Transverse colon (tissue), 4 donors: ENCODE measurements at regions of chr7 and their contacts with region 1.

Region 1: GRCh38 chr7:77759294-77759889 is 38.8 kb downstream of the TMEM60 start:
- DNase-seq: peak; percentile 66
- H3K4me3 ChIP-seq: no peak overlapping the region
- H3K27ac ChIP-seq: peak overlapping the region in 1 of 4 donors; percentile 44
- H3K4me1 ChIP-seq: peaks cover 0 to 46% (median 16%) of the 10 kb centered on the region in 4 donors
- H3K27me3 ChIP-seq: no peaks in the 10 kb centered on the region
- CTCF ChIP-seq: peak; percentile 78 to 86 (median 83)
- EP300 ChIP-seq: no peak
- POLR2A ChIP-seq: no peak

Region 2: DNA sequence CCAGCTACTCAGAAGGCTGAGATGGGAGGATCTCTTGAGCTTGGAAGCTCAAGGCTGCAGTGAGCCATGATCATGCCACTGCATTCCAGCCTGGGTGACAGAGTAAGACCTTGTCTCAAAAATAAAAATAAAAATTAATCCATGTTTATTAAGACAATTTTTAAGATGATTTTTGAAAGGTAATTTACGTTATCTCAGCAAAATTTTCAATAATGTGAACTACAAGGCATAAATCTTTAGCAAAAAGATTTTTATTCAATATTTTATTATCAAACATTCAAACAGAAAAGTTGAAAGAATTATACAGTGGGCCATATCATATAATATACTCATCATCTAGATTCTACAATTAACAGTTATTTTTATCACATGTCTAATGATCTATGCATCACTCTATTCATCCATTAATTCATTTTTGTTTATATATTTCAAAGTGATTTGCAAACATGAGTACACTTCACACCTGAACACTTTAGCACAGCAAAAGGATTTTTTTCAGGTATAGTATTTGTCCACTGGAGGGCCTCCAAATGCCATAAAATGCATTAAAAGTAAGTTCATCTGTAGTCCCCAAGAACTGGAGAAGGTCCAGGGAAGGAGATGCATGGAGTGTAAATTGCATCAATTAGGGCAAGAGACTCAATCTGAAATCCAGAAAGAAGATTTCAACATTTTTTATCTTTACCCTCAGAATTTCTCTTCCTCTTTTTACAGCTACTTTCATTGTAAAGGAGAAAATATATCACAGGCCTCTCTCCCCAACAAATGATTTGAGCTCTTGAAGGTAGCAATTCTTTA is 101.8 kb before region 1 on chr7:
- in situ Hi-C with region 1: loop called (anchors 5 to 10 kb)
- intact Hi-C with region 1: loop called (anchors 5 kb)
- DNase-seq: no peak
- H3K4me3 ChIP-seq: no peak overlapping the region
- H3K27ac ChIP-seq: no peak overlapping the region
- H3K4me1 ChIP-seq: peaks cover 4 to 48% (median 21%) of the 10 kb centered on the region in 4 donors
- H3K27me3 ChIP-seq: no peaks in the 10 kb centered on the region
- CTCF ChIP-seq: peak; percentile 43 to 74 (median 56)
- EP300 ChIP-seq: no peak
- POLR2A ChIP-seq: no peak

Region 3: DNA sequence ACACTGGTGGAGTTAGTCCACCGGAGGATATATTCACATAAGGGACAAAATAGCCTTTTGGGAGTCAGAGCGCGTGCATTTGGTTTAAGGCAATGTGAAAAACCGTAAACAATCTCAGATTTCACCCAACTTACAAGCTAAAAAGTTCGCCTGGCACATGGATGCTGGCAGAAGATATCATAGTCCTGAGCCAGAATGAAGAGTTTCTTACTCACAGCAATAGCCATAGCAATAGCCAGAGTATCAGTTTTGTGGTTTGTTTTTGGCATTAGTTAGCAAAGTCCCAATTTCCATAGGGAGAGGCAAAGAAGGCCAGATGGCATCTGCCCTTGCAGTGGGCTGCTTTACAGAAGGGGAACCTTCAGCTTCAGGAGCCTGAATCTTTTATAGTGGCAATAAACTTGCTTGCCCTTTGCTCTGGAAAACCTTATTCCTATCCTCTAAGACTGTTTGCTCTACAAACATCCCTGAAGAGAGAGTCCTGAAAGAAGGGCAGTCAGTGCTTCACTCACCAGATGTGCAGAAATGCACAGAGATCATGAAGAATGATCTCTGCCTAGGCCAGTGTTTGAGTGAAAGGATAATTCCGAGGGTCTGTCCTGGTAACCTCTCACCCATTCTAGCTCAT is 91.8 kb before region 1 on chr7:
- in situ Hi-C with region 1: loop called in 2 of 4 experiments (anchors 10 kb)
- intact Hi-C with region 1: no loop called
- DNase-seq: peak; percentile 35
- H3K4me3 ChIP-seq: no peak overlapping the region
- H3K27ac ChIP-seq: peak overlapping the region; percentile 53 to 82 (median 70)
- H3K4me1 ChIP-seq: peaks cover 5 to 52% (median 22%) of the 10 kb centered on the region in 4 donors
- H3K27me3 ChIP-seq: no peaks in the 10 kb centered on the region
- CTCF ChIP-seq: no peak
- EP300 ChIP-seq: no peak
- POLR2A ChIP-seq: no peak

Region 4: DNA sequence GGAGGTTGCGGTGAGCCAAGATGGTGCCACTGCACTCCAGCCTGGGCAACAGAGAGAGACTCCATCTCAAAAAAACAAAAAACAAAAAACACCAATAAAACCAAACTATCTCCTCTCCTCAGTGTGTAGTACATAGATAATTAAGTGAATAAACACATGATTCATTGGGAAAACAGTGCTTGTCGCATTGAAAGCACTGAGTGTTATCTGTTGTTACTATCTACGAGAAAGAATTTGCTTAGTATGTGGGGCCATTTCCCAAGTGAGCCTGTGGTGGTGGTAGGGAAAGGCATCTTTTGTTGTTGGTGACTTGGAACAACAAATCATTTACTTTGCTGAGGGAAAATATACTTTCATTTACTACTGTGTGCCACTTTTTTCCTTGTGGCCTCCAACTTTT is 20.5 kb before region 1 on chr7:
- in situ Hi-C with region 1: no loop called
- intact Hi-C with region 1: no loop called
- DNase-seq: no peak
- H3K4me3 ChIP-seq: no peak overlapping the region
- H3K27ac ChIP-seq: no peak overlapping the region
- H3K4me1 ChIP-seq: peaks cover 0 to 26% (median 13%) of the 10 kb centered on the region in 4 donors
- H3K27me3 ChIP-seq: no peaks in the 10 kb centered on the region
- CTCF ChIP-seq: no peak
- EP300 ChIP-seq: no peak
- POLR2A ChIP-seq: no peak